ENCODE measurements at regions of chr12 and their contacts with region 1.

Region 1: GRCh38 chr12:121637231-121637914 is 11.0 kb downstream of the ORAI1 start:
- DNase-seq: peak; percentile 67
- H3K4me3 Mint-ChIP-seq: peak overlapping the region; percentile 64
- H3K27ac Mint-ChIP-seq: peak overlapping the region; percentile 93
- H3K4me1 Mint-ChIP-seq: peaks cover 67% of the 10 kb centered on the region
- H3K27me3 Mint-ChIP-seq: no peaks in the 10 kb centered on the region

Region 2: GRCh38 chr12:121388421-121388981 is 248.9 kb before region 1 on chr12:
- CTCF ChIA-PET with region 1: no interaction called
- POLR2A ChIA-PET with region 1: no interaction called
- DNase-seq: no peak
- H3K4me3 Mint-ChIP-seq: no peak overlapping the region
- H3K27ac Mint-ChIP-seq: no peak overlapping the region
- H3K4me1 Mint-ChIP-seq: peaks cover 18% of the 10 kb centered on the region
- H3K27me3 Mint-ChIP-seq: no peaks in the 10 kb centered on the region

Region 3: DNA sequence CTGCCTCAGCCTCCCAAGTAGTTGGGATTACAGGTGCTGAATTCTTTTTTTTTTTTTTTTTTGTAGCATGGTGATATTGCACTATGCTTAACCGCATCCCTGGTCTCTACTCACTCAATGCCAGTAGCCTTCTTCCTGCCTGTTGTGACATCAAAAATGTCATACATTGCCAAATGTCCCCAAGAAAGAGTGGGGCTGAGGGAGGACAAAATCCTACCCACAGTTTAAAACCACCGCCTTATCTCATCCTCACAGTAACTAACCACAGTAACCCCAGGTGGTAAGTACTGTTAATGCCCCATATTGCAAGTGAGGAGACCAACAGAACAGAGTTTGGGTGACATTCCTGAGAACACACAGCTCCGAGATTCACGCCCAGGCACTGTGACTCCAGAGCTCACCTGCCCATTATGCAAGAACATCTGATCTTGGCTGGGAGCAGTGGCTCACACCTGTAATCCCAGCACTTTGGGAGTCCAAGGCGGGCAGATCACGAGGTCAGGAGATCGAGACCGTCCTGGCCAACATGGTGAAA is 12.5 kb after region 1 on chr12:
- CTCF ChIA-PET with region 1: interaction called, 21 read pairs
- POLR2A ChIA-PET with region 1: interaction called, 3 read pairs
- DNase-seq: peak; percentile 44
- H3K4me3 Mint-ChIP-seq: no peak overlapping the region
- H3K27ac Mint-ChIP-seq: peak overlapping the region; percentile 84
- H3K4me1 Mint-ChIP-seq: peaks cover 47% of the 10 kb centered on the region
- H3K27me3 Mint-ChIP-seq: no peaks in the 10 kb centered on the region

Region 4: DNA sequence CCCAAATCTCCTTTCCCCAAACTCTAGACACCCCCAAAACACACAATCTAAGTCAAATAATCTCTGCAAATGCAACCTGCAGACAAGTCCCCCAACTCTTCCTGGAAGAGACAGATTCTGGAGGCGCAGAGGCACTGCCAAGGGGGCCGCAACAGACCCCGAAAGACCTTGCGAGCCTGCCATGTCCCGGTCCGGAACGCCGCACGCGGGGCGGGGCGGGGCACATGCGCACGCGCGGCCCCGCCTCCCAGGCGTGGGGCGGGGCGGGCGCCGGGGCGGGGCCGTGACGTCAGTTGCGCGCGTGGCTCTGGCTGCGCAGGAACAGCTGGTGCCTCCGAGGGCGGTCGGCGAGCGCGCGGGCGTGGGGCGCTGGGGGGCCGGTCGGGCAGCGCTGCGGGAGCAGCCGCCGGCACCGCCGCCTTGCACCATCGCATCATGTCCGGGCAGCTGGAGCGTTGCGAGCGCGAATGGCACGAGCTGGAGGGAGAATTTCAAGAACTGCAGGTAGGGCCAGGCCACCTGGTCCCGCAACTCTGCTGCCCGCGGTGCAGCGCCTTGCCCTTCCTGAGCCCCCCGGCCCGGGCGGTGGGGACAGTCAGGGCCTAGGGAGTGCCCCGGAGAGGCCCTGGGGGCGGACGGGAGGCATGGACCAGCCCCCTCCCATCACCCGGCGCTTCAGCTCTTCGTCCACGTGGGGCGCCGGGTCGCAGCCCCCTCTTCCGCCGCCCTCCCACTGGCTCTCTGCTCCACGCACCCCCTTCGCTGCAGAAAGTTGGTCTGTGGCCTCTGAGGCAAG is 75.3 kb after region 1 on chr12 and contains the start of gene TMEM120B:
- CTCF ChIA-PET with region 1: no interaction called
- POLR2A ChIA-PET with region 1: no interaction called
- DNase-seq: peak; percentile 82
- H3K4me3 Mint-ChIP-seq: peak within 1 kb of the TSS; percentile 86
- H3K27ac Mint-ChIP-seq: peak within 1 kb of the TSS; percentile 93
- H3K4me1 Mint-ChIP-seq: peaks cover 23% of the 10 kb centered on the region
- H3K27me3 Mint-ChIP-seq: peaks cover 1% of the 10 kb centered on the region
- total RNA-seq, gene TMEM120B: 5.8 to 6.0 TPM

Measured in activated CD4-positive, alpha-beta T cell treated with anti-CD3 and anti-CD28 coated beads, Interleukin-2, amount 10 ng/mL, durations not matched to agents 7 days and 5 days (primary cell).